Panc1 (cell line): ENCODE measurements at regions of chr10 and their contacts with region 1.

Region 1: DNA sequence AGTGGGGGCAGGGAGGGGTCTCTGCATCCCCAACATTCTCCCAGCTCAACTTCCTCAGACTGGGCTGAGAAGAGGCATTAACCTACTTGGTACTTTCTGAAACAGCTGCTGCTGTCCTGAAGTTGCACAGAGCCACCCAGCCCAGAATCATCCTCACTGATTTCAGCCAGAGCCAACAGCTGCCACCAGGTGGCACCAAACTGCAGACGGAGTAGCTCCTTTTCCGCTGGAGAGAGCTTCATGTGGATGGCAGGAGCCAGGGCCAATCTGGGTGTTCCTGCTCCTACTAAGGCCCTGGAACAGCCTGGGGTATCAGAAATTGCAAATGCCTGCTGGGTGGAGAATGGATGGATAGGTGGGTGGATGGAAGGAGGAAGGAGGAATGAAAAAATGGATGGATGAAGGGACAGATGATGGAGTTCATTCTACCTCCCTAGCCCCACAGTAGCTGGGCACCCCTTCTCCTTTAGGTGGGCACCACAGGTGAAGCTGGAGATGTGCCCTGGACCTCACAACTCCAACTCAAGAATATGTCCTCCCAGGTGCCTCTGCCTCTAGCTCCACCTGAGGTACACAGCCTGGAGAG is 11.8 kb upstream of the DRGX start:
- DNase-seq: peak; percentile 51
- ATAC-seq: peak; percentile 98
- H3K4me3 ChIP-seq: no peak overlapping the region
- H3K27ac ChIP-seq: no peak overlapping the region
- H3K4me1 ChIP-seq: no peaks in the 10 kb centered on the region; the same call in 1 of the 2 replicates
- H3K27me3 ChIP-seq: peaks cover 19% of the 10 kb centered on the region
- CTCF ChIP-seq: peak; percentile 95

Region 2: GRCh38 chr10:49512121-49512809 is 104.6 kb after region 1 on chr10:
- CTCF ChIA-PET with region 1: interaction called, 21 read pairs
- POLR2A ChIA-PET with region 1: no interaction called
- in situ Hi-C with region 1: no loop called
- intact Hi-C with region 1: loop called (anchors 1 kb)
- DNase-seq: peak; percentile 24
- ATAC-seq: peak; percentile 85
- H3K4me3 ChIP-seq: no peak overlapping the region
- H3K27ac ChIP-seq: no peak overlapping the region
- H3K4me1 ChIP-seq: no peaks in the 10 kb centered on the region
- H3K27me3 ChIP-seq: no peaks in the 10 kb centered on the region
- CTCF ChIP-seq: peak; percentile 82

Region 3: GRCh38 chr10:49518982-49519578 is 111.4 kb after region 1 on chr10:
- CTCF ChIA-PET with region 1: interaction called, 25 read pairs
- POLR2A ChIA-PET with region 1: no interaction called
- in situ Hi-C with region 1: no loop called
- intact Hi-C with region 1: no loop called
- DNase-seq: peak; percentile 22
- ATAC-seq: peak; percentile 88
- H3K4me3 ChIP-seq: no peak overlapping the region
- H3K27ac ChIP-seq: no peak overlapping the region
- H3K4me1 ChIP-seq: no peaks in the 10 kb centered on the region
- H3K27me3 ChIP-seq: no peaks in the 10 kb centered on the region
- CTCF ChIP-seq: peak; percentile 87

Region 4: DNA sequence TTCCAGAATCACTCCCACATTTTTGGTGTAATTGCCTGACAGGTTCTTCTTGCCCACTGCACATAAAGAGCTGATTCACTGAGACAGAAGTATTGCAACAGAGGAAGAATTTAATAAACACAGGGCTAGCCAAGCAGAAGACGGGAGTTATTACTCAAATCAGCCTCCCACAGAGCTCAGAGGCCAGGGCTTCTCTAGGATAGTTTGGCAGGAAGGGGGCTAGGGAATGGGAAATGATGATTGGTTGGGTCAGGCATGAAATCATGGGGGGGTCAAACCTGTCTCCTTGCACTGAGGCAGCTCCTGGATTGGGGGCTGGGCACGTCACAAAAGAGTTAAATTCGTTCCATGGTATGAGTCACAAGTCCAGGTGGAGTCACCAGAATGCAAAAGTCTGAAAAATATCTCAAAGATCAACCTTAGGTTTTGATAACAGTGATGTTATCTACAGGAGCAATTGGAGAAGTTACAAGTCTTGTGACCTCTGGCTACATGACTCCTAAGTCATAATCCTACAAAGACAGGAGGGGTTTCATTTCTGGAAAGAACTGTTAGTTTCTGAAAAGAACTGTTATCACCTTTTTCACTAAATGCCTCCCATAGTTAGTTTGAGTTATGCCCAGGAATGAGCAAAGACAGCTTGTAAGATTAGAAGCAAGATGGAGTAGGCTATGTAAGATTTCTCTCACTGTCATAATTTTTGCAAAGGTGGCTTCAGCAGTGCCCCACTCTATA is 161.6 kb after region 1 on chr10:
- CTCF ChIA-PET with region 1: no interaction called
- POLR2A ChIA-PET with region 1: no interaction called
- in situ Hi-C with region 1: no loop called
- intact Hi-C with region 1: no loop called
- DNase-seq: no peak
- ATAC-seq: no peak
- H3K4me3 ChIP-seq: no peak overlapping the region
- H3K27ac ChIP-seq: no peak overlapping the region
- H3K4me1 ChIP-seq: no peaks in the 10 kb centered on the region
- H3K27me3 ChIP-seq: peaks cover 5% of the 10 kb centered on the region; the same call in 1 of the 2 replicates
- CTCF ChIP-seq: no peak